GM18951 (cell line): ENCODE measurements at regions of chr9 and their contacts with region 1.

Region 1: DNA sequence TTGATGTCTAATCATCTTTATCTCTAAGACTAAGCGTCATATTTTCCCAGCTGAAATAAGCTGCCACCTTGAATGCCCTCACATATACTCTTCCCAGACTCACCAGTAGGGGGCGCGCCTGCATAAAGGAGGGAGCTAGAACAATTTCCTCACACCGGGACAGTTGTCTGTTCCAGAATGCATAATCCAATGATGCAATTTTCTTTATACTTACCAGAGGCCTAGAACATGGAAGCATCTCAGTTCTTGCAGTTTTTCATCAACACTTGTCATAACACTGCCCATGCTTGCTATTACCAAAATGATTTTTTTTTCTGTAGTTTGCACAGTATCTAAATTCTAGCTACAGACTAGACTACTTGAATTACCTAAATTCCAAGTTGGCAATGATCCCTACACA is 203.9 kb downstream of the FRMD3 start:
- POLR2A ChIP-seq: no peak

Region 2: GRCh38 chr9:83182071-83182470 is 152.2 kb before region 1 on chr9:
- in situ Hi-C with region 1: no loop called
- POLR2A ChIP-seq: no peak

Region 3: DNA sequence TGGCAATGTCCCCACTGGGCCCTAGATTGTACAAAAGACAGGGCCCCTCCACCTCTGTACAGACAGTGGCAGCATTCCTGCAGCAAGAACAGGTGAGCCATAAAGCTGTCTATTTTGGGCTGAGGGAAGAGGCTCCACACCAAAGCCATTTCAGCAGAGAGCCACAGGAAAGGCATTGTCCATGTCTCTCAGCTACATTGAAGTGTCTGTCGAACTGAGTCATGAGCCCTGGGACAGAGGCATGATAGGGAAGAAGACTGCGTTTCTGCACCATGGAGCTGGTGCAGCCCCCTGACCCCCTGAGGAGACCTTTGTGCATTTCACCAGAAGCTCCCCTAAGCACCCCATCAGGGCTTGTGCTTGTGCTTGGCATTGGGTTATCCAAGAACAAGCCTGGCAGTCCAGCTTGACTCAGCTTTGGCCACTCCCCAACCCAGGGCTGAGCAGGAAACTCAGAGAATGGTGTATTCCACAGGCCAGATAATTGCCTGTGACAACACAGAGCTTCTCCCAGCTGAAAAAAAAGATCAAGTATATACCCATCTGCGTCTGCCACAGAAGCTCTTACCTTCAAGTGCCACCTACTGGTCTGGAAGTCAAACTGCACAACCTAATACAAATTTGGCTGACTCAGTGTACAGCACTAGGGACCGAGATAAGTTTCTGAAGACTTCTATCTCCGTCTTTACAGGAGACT is 209.8 kb after region 1 on chr9:
- in situ Hi-C with region 1: loop called (anchors 10 kb)
- POLR2A ChIP-seq: no peak

Region 4: DNA sequence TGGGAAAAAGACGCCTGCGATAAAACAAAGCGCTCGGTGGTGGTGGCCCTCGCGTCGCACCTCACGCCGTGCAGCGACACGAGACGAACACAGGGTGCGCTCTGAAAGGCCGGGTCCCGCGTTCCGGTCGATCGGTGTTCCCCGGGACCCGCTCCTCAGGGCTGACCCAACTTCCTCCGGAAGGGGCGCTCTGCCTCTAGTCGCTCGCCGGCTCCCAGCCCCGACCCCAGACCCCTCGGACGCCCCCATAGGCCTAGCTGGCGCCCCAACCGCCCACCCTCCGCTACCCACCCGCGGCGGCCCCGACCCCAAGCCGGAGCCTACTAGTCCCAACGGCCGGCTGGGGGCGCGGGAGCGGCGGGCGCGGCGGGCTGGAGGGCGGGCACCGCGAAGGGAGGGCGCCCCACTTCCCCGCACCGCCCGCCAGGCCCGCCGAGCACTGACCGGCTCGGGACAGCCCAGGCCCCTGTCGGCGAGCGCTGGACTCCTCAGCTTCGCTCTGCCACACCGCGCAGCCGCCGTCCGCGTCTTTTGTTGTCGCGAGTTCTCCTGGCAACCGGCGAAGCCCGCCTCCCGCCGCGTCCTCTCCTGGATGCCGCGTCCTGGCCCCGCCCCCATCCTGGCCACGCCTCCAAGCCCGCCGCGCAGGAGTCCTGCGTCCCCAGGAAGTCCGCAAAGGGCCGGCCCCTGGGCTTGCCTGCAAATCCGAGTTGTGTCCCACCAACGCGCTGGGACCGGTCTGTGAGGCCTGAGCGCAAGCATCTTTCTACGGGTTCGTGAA is 586.8 kb after region 1 on chr9 and contains the start of gene KIF27:
- in situ Hi-C with region 1: loop called (anchors 25 kb)
- POLR2A ChIP-seq: peak; percentile 94